ENCODE measurements at regions of chr3 and their contacts with region 1.

Region 1: GRCh38 chr3:185942907-185943759 is 5.3 kb upstream of the TRA2B start:
- DNase-seq: peak; percentile 90
- ATAC-seq: peak; percentile 99
- H3K4me3 Mint-ChIP-seq: no peak overlapping the region
- H3K27ac Mint-ChIP-seq: peak overlapping the region; percentile 16; the same call in 1 of the 2 replicates
- H3K4me1 Mint-ChIP-seq: peaks cover 7% of the 10 kb centered on the region
- H3K27me3 Mint-ChIP-seq: peaks cover 11% of the 10 kb centered on the region
- CTCF ChIP-seq: peak; percentile 98

Region 2: GRCh38 chr3:185613016-185613415 is 330.1 kb before region 1 on chr3:
- CTCF ChIA-PET with region 1: no interaction called
- POLR2A ChIA-PET with region 1: no interaction called
- DNase-seq: no peak
- ATAC-seq: no peak
- H3K4me3 Mint-ChIP-seq: no peak overlapping the region
- H3K27ac Mint-ChIP-seq: no peak overlapping the region
- H3K4me1 Mint-ChIP-seq: no peaks in the 10 kb centered on the region
- H3K27me3 Mint-ChIP-seq: no peaks in the 10 kb centered on the region
- CTCF ChIP-seq: no peak

Region 3: GRCh38 chr3:185929192-185930151 is 13.7 kb before region 1 on chr3:
- CTCF ChIA-PET with region 1: interaction called, 32 read pairs
- POLR2A ChIA-PET with region 1: interaction called, 12 read pairs
- DNase-seq: no peak
- ATAC-seq: peak; percentile 21; the same call in 1 of the 2 replicates
- H3K4me3 Mint-ChIP-seq: peak overlapping the region; percentile 100
- H3K27ac Mint-ChIP-seq: peak overlapping the region; percentile 79
- H3K4me1 Mint-ChIP-seq: peaks cover 92% of the 10 kb centered on the region
- H3K27me3 Mint-ChIP-seq: no peaks in the 10 kb centered on the region
- CTCF ChIP-seq: no peak

Region 4: GRCh38 chr3:185968168-185968567 is 25.0 kb after region 1 on chr3:
- CTCF ChIA-PET with region 1: interaction called, 45 read pairs
- POLR2A ChIA-PET with region 1: no interaction called
- DNase-seq: no peak
- ATAC-seq: no peak
- H3K4me3 Mint-ChIP-seq: no peak overlapping the region
- H3K27ac Mint-ChIP-seq: no peak overlapping the region
- H3K4me1 Mint-ChIP-seq: no peaks in the 10 kb centered on the region
- H3K27me3 Mint-ChIP-seq: peaks cover 5% of the 10 kb centered on the region
- CTCF ChIP-seq: no peak

Region 5: GRCh38 chr3:185995352-185995751 is 52.2 kb after region 1 on chr3:
- CTCF ChIA-PET with region 1: interaction called, 14 read pairs
- POLR2A ChIA-PET with region 1: no interaction called
- DNase-seq: no peak
- ATAC-seq: no peak
- H3K4me3 Mint-ChIP-seq: no peak overlapping the region
- H3K27ac Mint-ChIP-seq: no peak overlapping the region
- H3K4me1 Mint-ChIP-seq: no peaks in the 10 kb centered on the region
- H3K27me3 Mint-ChIP-seq: no peaks in the 10 kb centered on the region; the same call in 1 of the 2 replicates
- CTCF ChIP-seq: no peak

Region 6: DNA sequence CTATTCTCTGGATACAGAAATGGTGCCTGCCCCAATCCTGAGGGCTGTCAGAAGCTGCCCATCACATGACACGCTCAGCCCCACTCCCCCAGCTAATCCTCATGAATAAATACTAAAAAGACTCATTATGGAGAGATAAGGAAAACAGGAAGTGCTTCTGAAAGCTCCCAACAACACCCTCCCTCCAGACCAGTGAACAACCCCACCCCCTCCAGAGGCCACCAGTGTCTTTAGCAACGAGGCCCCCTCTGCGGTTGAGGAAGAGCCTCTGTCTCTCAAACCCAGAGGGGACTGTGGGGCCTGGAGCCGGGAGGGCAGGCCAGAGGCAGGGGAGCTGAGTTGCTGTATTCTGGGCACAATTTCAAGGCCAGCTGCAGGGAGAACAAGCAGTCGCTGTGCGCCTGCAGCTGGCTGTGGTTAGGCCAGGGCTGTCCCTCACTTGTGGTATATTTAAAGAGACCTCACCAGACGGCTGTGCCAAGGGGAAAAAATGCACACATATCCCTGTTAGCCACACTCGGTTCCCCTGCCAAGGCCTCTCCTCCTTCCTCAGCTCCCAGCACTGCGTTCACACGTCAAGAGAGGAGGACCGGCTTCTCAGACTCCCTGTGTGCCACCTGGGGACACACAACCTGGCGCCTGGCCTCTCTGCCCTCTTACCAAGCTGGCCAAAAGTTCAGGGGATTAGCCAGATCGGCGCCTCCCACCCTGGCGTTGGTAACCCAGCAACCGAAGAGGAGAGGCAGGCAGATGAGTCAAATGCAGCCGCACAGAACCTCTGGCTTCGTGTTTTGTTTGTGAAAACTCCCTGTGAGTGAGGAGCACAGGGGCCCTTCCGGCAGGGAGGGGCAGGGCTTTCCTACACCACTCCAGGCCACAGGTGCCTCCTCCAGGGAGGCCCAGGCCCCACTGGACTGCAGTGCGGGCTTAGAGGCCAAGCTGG is 266.9 kb after region 1 on chr3:
- CTCF ChIA-PET with region 1: interaction called, 10 read pairs
- POLR2A ChIA-PET with region 1: no interaction called
- DNase-seq: peak; percentile 26
- ATAC-seq: peak; percentile 83
- H3K4me3 Mint-ChIP-seq: no peak overlapping the region
- H3K27ac Mint-ChIP-seq: peak overlapping the region; percentile 67; the same call in 1 of the 2 replicates
- H3K4me1 Mint-ChIP-seq: peaks cover 49% of the 10 kb centered on the region
- H3K27me3 Mint-ChIP-seq: no peaks in the 10 kb centered on the region
- CTCF ChIP-seq: no peak

Region 7: DNA sequence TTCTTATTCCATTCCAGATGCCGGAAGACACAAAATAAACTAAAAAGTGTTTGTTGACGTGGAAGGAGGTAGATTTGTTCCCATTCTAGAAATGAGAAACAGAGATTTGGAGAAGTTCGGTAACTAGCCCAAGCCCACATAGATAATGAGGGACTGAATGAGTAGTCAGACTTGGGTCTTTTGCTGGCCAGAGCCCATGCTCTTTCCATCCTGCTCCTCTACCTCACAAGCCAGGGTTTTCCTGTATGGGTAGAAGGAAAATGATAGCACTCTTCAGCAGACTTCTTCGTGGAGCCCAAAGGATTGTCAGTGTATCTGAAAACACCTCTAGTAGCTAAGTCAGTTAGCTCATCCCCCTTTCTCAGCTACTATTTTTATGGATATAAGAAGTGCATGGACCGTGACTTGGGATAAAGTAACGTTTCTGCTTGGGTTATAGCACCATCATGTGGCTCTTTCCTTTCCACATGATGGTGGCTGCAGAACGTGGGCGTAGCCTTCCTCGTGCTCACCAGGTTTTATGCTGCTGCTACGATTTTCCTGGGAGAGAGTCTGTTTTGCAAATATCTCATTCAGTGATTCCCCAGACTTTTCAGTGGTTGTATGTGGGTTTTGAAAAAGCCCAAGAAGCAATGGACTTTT is 334.3 kb after region 1 on chr3:
- CTCF ChIA-PET with region 1: interaction called, 29 read pairs
- POLR2A ChIA-PET with region 1: no interaction called
- DNase-seq: no peak
- ATAC-seq: peak; percentile 98
- H3K4me3 Mint-ChIP-seq: no peak overlapping the region
- H3K27ac Mint-ChIP-seq: no peak overlapping the region
- H3K4me1 Mint-ChIP-seq: peaks cover 11% of the 10 kb centered on the region
- H3K27me3 Mint-ChIP-seq: no peaks in the 10 kb centered on the region; the same call in 1 of the 2 replicates
- CTCF ChIP-seq: no peak

Measured in WTC11 (cell line).